Right cardiac atrium (tissue), 5 donors: ENCODE measurements at regions of chr3 and their contacts with region 1.

Region 1: DNA sequence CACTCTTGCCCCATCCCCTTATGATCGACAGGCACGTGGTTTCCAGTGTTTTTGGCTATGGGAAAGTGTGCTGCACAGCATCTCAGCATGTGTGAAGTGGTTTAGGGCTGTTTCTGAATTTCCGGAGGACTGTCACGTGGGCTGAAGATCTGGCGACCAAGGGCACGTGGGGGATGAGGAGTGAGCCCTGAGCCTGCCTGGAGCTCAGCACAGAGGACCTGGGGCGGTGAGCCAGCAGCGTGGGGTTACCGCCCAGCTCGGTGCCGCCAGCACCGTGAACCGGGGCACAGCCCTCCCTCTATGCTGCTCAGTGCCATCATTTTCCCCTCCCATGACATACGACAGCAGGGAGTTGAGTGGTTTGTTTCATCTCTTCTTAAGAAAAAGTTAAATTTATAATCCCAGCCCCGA is 150.2 kb downstream of the DNAJB8 start:
- DNase-seq: peak; percentile 51 to 73 (median 71)
- ATAC-seq: peak; percentile 39 to 57
- H3K4me3 ChIP-seq: no peak overlapping the region
- H3K27ac ChIP-seq: no peak overlapping the region
- H3K4me1 ChIP-seq: peaks cover 6% of the 10 kb centered on the region
- H3K27me3 ChIP-seq: no peaks in the 10 kb centered on the region

Region 2: GRCh38 chr3:128051837-128052594 is 264.5 kb before region 1 on chr3 and contains the start of gene SEC61A1:
- intact Hi-C with region 1: no loop called
- DNase-seq: peak; percentile 96 to 99 (median 98)
- ATAC-seq: peak; percentile 97 to 98
- H3K4me3 ChIP-seq: peak within 1 kb of the TSS; percentile 94
- H3K27ac ChIP-seq: peak within 1 kb of the TSS; percentile 92
- H3K4me1 ChIP-seq: peaks cover 5% of the 10 kb centered on the region
- H3K27me3 ChIP-seq: no peaks in the 10 kb centered on the region
- total RNA-seq, gene SEC61A1: 64.0 to 129 (median 83.9) TPM

Region 3: GRCh38 chr3:128075516-128076482 is 240.7 kb before region 1 on chr3:
- intact Hi-C with region 1: loop called in 1 of 4 experiments (anchors 10 kb)
- DNase-seq: peak; percentile 90 to 97 (median 97)
- ATAC-seq: peak; percentile 84 to 89
- H3K4me3 ChIP-seq: peak overlapping the region; percentile 43
- H3K27ac ChIP-seq: peak overlapping the region; percentile 60
- H3K4me1 ChIP-seq: peaks cover 6% of the 10 kb centered on the region
- H3K27me3 ChIP-seq: no peaks in the 10 kb centered on the region

Region 4: GRCh38 chr3:128133273-128134084 is 183.0 kb before region 1 on chr3:
- intact Hi-C with region 1: no loop called
- DNase-seq: peak in 1 of 3 donors; percentile 22
- ATAC-seq: peak; percentile 64 to 80
- H3K4me3 ChIP-seq: no peak overlapping the region
- H3K27ac ChIP-seq: no peak overlapping the region
- H3K4me1 ChIP-seq: no peaks in the 10 kb centered on the region
- H3K27me3 ChIP-seq: no peaks in the 10 kb centered on the region

Region 5: GRCh38 chr3:128572644-128573105 is 256.2 kb after region 1 on chr3:
- intact Hi-C with region 1: no loop called
- DNase-seq: no peak
- ATAC-seq: no peak
- H3K4me3 ChIP-seq: no peak overlapping the region
- H3K27ac ChIP-seq: no peak overlapping the region
- H3K4me1 ChIP-seq: peaks cover 3% of the 10 kb centered on the region
- H3K27me3 ChIP-seq: no peaks in the 10 kb centered on the region